BJ (cell line): ENCODE measurements at regions of chr10 and their contacts with region 1.

Region 1: DNA sequence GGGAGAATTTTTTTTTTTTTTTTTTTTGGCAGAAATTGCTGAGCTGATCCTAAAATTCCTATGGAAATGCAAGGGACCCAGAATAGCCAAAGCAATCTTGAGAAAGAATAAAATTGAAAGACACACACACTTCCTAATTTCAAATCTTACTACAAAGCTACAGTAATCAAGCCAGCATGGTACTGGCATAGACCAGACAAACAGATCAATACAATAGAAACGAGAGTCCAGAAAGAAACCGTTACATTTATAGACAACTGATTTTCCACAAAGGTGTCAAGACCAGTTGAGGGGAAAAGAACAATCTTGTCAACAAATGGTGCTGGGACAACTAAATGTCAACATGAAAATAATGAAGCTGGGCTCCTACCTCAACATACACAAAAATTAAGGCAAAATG is 34.5 kb downstream of the LARP4B start:
- DNase-seq: no peak
- H3K4me3 ChIP-seq: no peak overlapping the region
- H3K27me3 ChIP-seq: no peaks in the 10 kb centered on the region
- CTCF ChIP-seq: no peak

Region 2: DNA sequence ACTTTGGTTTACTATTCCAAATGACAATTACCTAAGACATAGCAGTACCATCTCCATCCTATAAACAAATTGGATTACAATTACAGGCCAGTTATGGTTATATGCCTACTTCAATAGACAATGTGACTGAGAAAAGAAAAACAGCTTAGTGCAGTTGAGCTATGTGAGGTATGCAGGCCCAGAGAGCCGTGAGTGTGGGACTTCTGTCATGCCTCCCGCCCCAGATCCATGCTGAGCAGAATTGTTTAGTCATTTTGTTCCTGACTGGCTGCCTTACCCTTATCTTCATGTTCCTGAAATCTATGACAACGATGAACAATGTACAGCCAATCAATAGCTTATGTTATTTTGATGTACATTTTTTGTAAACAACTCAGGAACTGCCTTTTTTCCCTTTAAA is 12.8 kb after region 1 on chr10:
- CTCF ChIA-PET with region 1: interaction called, 6 read pairs
- POLR2A ChIA-PET with region 1: interaction called, 10 read pairs
- DNase-seq: peak; percentile 30
- H3K4me3 ChIP-seq: no peak overlapping the region
- H3K27me3 ChIP-seq: no peaks in the 10 kb centered on the region
- CTCF ChIP-seq: no peak